ENCODE measurements at regions of chr3 and their contacts with region 1.

Region 1: GRCh38 chr3:117628823-117629291 is 919.3 kb downstream of the TUSC7 start:
- DNase-seq: peak in 1 of 2 donors; percentile 32
- H3K4me3 ChIP-seq: no peak overlapping the region
- H3K27ac ChIP-seq: no peak overlapping the region
- H3K4me1 ChIP-seq: peaks cover 0 to 5% of the 10 kb centered on the region in 2 donors
- H3K27me3 ChIP-seq: no peaks in the 10 kb centered on the region
- CTCF ChIP-seq: no peak
- POLR2A ChIP-seq: no peak

Region 2: GRCh38 chr3:116678853-116679252 is 950.0 kb before region 1 on chr3:
- intact Hi-C with region 1: loop called (anchors 5 kb)
- DNase-seq: no peak
- H3K4me3 ChIP-seq: no peak overlapping the region
- H3K27ac ChIP-seq: no peak overlapping the region
- H3K4me1 ChIP-seq: no peaks in the 10 kb centered on the region
- H3K27me3 ChIP-seq: no peaks in the 10 kb centered on the region
- CTCF ChIP-seq: no peak
- POLR2A ChIP-seq: no peak

Region 3: GRCh38 chr3:117665296-117665695 is 36.4 kb after region 1 on chr3:
- intact Hi-C with region 1: loop called (anchors 2 kb)
- DNase-seq: peak in 1 of 2 donors; percentile 54
- H3K4me3 ChIP-seq: no peak overlapping the region
- H3K27ac ChIP-seq: no peak overlapping the region
- H3K4me1 ChIP-seq: no peaks in the 10 kb centered on the region
- H3K27me3 ChIP-seq: no peaks in the 10 kb centered on the region
- CTCF ChIP-seq: no peak
- POLR2A ChIP-seq: no peak